Naive thymus-derived CD4-positive, alpha-beta T cell (primary cell): ENCODE measurements at regions of chr17 and their contacts with region 1.

Region 1: DNA sequence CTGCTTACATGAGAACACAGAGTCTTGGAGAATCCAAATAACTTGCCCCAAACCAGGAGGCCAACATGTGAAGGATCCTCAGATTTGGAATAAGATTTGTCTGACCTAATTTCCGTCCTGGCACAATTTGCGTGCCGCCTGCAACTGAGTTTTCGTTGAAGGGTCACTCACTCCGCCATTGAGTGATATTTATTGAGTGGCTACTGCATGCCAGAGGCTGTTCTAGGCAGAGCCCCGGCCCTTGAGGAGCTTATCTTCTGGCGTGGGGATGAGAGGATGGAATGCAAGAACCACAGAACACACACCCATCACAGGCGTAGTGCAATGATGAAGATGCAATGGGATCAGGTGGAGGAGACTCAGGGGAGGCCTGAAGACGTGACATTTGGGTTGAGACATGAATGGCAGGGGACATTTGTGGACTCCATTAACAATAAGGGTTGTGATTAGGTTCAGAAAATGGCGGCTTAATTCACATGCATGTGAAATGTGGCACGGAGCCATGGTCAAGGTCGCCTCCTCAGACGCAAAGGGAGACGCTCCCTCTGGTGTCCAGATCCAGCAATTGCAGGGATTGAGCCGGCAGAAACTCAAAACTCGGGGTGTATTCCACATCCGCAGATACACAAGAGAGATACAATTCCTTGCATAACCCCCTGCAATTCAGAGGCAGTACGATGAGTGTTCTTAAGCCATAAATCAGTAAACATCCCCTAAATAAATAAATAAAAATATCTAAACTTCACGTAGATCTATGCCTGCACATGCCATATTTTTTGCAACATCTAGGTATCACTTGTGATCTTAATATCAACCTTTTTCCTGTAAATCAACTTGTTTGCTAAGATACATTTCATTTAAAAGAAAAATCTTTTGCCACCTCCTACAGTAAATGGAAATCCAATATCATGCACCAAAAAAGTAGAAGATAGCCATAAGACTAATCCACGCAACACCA is 57.9 kb upstream of the CACNG4 start:
- DNase-seq: peak; percentile 15 to 64 (median 51)
- ATAC-seq: peak; percentile 76
- H3K4me3 ChIP-seq: no peak overlapping the region
- H3K4me3 Mint-ChIP-seq: peak overlapping the region in 1 of 10 donors; percentile 4
- H3K27ac ChIP-seq: no peak overlapping the region
- H3K27ac Mint-ChIP-seq: peak overlapping the region in 2 of 9 donors; percentile 25 to 27
- H3K4me1 ChIP-seq: no peaks in the 10 kb centered on the region
- H3K4me1 Mint-ChIP-seq: peaks cover 0 to 9% (median 6%) of the 10 kb centered on the region in 7 donors
- H3K27me3 ChIP-seq: peaks cover 0 to 4% of the 10 kb centered on the region in 2 donors
- H3K27me3 Mint-ChIP-seq: peaks cover 0 to 12% (median 6%) of the 10 kb centered on the region in 5 donors

Region 2: GRCh38 chr17:65294179-65294720 is 1612.3 kb before region 1 on chr17:
- CTCF ChIA-PET with region 1: no interaction called
- POLR2A ChIA-PET with region 1: no interaction called
- intact Hi-C with region 1: loop called in 1 of 2 experiments (anchors 5 kb)
- DNase-seq: peak; percentile 15 to 70 (median 60)
- ATAC-seq: peak; percentile 86
- H3K4me3 ChIP-seq: no peak overlapping the region
- H3K4me3 Mint-ChIP-seq: no peak overlapping the region
- H3K27ac ChIP-seq: no peak overlapping the region
- H3K27ac Mint-ChIP-seq: peak overlapping the region in 1 of 9 donors; percentile 80
- H3K4me1 ChIP-seq: no peaks in the 10 kb centered on the region
- H3K4me1 Mint-ChIP-seq: peaks cover 0 to 5% (median 5%) of the 10 kb centered on the region in 7 donors
- H3K27me3 ChIP-seq: no peaks in the 10 kb centered on the region
- H3K27me3 Mint-ChIP-seq: peaks cover 0 to 18% (median 0%) of the 10 kb centered on the region in 5 donors

Region 3: GRCh38 chr17:66567234-66568170 is 339.1 kb before region 1 on chr17:
- CTCF ChIA-PET with region 1: no interaction called
- POLR2A ChIA-PET with region 1: no interaction called
- intact Hi-C with region 1: loop called in 1 of 2 experiments (anchors 1 kb)
- DNase-seq: peak; percentile 30 to 76 (median 65)
- ATAC-seq: peak; percentile 87
- H3K4me3 ChIP-seq: no peak overlapping the region
- H3K4me3 Mint-ChIP-seq: no peak overlapping the region
- H3K27ac ChIP-seq: no peak overlapping the region
- H3K27ac Mint-ChIP-seq: peak overlapping the region in 7 of 9 donors; percentile 3 to 87 (median 23)
- H3K4me1 ChIP-seq: peaks cover 0 to 14% of the 10 kb centered on the region in 2 donors
- H3K4me1 Mint-ChIP-seq: peaks cover 17 to 56% (median 51%) of the 10 kb centered on the region in 7 donors
- H3K27me3 ChIP-seq: no peaks in the 10 kb centered on the region
- H3K27me3 Mint-ChIP-seq: no peaks in the 10 kb centered on the region

Region 4: DNA sequence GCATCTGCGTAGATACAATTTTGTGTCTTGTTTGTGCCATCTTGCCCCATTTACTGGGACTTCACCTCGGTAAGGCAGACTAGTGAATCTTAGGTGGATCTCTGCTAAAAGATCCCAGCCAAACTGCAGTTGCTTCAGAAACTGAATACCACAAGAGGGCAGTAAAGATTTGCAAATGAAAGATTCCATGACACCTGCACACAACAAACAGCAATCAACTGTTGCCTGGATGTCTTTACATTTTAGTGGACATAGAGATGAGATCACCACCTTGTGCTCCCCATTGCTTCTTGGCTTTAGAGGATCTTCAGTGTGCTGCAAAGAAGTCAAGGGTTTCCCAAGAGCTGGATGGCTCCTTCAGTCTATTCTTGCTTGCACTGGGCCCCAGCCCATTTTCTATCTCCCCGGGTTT is 190.8 kb before region 1 on chr17:
- CTCF ChIA-PET with region 1: no interaction called
- POLR2A ChIA-PET with region 1: no interaction called
- intact Hi-C with region 1: loop called in 1 of 2 experiments (anchors 2 kb)
- DNase-seq: peak in 7 of 9 donors; percentile 13 to 51 (median 41)
- ATAC-seq: peak; percentile 62
- H3K4me3 ChIP-seq: no peak overlapping the region
- H3K4me3 Mint-ChIP-seq: no peak overlapping the region
- H3K27ac ChIP-seq: no peak overlapping the region
- H3K27ac Mint-ChIP-seq: peak overlapping the region in 3 of 9 donors; percentile 46 to 83 (median 65)
- H3K4me1 ChIP-seq: peaks cover 10 to 29% of the 10 kb centered on the region in 2 donors
- H3K4me1 Mint-ChIP-seq: peaks cover 12 to 49% (median 33%) of the 10 kb centered on the region in 7 donors
- H3K27me3 ChIP-seq: no peaks in the 10 kb centered on the region
- H3K27me3 Mint-ChIP-seq: no peaks in the 10 kb centered on the region

Region 5: DNA sequence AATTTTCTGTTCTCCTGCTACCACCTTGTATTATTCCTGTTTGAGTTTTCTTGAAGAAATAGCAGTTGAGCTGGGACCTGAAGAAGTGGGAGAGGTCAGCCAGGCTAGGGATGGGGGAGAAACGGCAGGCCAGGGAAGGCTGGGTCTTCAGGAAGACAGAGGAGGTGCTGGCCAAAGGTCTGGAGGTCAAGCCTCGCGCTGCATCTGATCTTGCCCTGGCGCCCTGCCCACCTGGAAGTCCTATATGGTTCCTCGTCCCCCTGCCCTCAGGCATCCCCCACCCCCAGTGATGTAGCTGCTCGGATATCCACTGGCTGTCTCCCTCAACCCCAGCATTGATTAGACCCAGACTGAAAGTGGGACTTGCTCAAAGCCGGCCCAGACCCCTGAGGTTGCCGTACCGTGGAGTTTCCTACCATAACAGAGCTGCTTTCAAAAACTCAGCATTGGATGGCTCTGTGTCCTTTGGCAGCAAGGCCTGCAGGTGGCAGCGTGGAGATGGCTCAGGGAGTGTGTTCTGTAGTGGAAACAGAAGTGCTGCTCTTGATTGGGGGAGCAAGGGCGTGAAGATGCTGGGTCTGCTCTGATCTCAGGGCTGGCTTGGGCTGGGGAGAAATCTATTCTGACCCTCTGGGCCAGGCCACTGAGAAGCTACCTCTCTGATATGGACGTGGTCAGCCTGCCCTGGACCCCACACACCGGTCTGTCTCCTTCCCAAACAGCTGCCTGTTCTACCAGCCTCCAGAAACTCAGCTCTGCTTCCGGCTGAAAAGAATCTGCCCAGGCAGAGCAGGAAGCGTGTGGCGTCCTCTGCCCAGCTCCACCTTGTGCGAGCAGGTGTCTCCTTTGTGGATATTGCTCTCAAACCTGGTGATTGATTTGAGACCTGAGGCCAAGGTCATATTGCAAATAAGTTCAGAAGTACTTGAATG is 178.7 kb before region 1 on chr17:
- CTCF ChIA-PET with region 1: no interaction called
- POLR2A ChIA-PET with region 1: no interaction called
- intact Hi-C with region 1: loop called in 1 of 2 experiments (anchors 1 kb)
- DNase-seq: peak in 5 of 9 donors; percentile 10 to 36 (median 20)
- ATAC-seq: peak; percentile 66
- H3K4me3 ChIP-seq: no peak overlapping the region
- H3K4me3 Mint-ChIP-seq: peak overlapping the region in 1 of 10 donors; percentile 25
- H3K27ac ChIP-seq: no peak overlapping the region
- H3K27ac Mint-ChIP-seq: peak overlapping the region in 7 of 9 donors; percentile 6 to 76 (median 48)
- H3K4me1 ChIP-seq: no peaks in the 10 kb centered on the region
- H3K4me1 Mint-ChIP-seq: peaks cover 7 to 33% (median 20%) of the 10 kb centered on the region in 7 donors
- H3K27me3 ChIP-seq: no peaks in the 10 kb centered on the region
- H3K27me3 Mint-ChIP-seq: no peaks in the 10 kb centered on the region